ENCODE measurements at regions of chr15 and their contacts with region 1.

Region 1: DNA sequence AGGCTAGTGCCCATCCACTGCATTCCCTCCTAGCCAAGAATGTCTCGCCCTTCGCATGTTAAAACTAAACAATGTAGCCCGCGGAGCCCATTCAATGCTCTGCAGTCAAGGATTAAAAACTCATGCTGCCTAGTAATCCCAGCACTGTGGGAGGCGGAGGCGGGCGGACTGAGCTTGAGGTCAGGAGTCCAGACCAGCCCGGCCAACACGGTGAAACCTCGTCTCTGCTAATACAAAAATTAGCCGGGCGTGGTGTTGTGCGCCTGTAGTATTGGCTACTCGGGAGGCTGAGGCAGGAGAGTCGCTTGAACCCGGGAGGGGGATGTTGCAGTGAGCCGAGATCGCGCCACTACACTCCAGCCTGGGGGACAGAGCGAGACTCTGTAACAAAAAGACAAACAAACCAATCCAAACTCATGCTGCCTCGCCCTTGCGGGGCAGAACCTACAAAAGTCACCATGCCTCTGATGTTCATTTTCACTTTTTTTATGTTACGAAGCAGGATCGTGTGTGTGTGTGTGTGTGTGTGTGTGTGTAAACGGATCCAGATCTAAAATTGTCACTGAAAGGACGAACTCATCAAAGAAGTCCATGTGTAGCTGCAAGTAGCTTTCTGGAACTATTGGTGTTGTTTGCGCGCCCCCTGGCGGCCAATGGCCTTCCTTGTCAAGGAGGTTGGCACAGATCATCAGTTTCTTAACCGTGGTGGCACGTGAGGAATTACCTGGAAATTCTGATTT is 54.8 kb upstream of the SPESP1 start:
- DNase-seq: peak; percentile 75 to 84 (median 81)
- H3K4me3 ChIP-seq: peak overlapping the region in 1 of 3 experiments; percentile 28
- H3K4me3 Mint-ChIP-seq: peak overlapping the region in 1 of 2 donors; percentile 71
- H3K27ac ChIP-seq: no peak overlapping the region
- H3K27ac Mint-ChIP-seq: no peak overlapping the region
- H3K4me1 ChIP-seq: peaks cover 5 to 6% of the 10 kb centered on the region in 2 donors
- H3K4me1 Mint-ChIP-seq: peaks cover 6% of the 10 kb centered on the region
- H3K27me3 ChIP-seq: peaks cover 0 to 2% of the 10 kb centered on the region in 2 donors
- H3K27me3 Mint-ChIP-seq: peaks cover 3 to 13% (median 5%) of the 10 kb centered on the region in 3 donors
- CTCF ChIP-seq: peak; percentile 79

Region 2: DNA sequence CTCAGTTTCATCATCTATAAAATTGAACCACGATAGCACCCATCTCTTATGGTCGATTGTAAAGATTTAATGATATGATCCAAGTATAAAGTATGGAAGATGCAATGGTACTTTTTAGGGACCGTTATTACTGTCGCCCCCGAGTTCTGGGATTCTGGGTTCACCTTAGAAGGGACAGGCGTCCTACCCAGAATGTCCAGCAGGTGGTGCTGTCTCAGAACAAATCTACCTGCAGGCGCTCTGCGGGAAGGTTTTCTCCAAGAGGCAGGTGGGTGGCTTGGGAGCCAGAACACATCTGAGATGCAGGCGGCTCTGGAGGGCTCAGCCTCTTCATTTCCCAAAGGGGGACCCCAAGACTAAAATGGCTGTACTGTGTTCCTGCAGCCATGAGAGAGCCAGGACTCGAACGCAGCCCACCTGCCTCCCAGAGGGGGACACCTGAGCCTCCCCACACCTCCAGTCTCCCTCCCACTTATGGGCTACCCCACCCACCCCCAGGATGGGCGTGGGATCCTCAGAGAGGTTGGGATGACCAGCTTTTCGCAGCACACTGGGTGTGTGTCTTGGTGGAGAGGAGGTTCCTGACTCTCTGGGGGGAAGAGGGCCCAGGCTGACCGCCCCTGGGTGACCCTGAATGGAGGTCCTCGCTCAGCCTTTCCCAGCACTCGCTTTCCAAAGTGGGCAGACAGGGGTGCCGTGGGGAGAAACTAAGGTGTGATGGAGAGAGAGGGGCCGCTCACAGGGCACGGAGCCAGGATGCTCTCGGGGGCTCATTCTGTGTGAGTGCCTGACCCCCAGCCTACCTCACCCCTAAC is 324.9 kb before region 1 on chr15:
- intact Hi-C with region 1: loop called (anchors 2 to 5 kb)
- DNase-seq: peak; percentile 32 to 55 (median 53)
- H3K4me3 ChIP-seq: no peak overlapping the region
- H3K4me3 Mint-ChIP-seq: no peak overlapping the region
- H3K27ac ChIP-seq: no peak overlapping the region
- H3K27ac Mint-ChIP-seq: no peak overlapping the region
- H3K4me1 ChIP-seq: no peaks in the 10 kb centered on the region
- H3K4me1 Mint-ChIP-seq: no peaks in the 10 kb centered on the region
- H3K27me3 ChIP-seq: no peaks in the 10 kb centered on the region
- H3K27me3 Mint-ChIP-seq: peaks cover 10 to 13% (median 12%) of the 10 kb centered on the region in 3 donors
- CTCF ChIP-seq: peak; percentile 96

Region 3: GRCh38 chr15:68559345-68560310 is 315.9 kb before region 1 on chr15:
- intact Hi-C with region 1: loop called in 1 of 2 experiments (anchors 5 kb)
- DNase-seq: peak; percentile 63 to 74 (median 65)
- H3K4me3 ChIP-seq: peak overlapping the region in 2 of 3 experiments; percentile 20 to 64
- H3K4me3 Mint-ChIP-seq: peak overlapping the region; percentile 77 to 96
- H3K27ac ChIP-seq: no peak overlapping the region
- H3K27ac Mint-ChIP-seq: peak overlapping the region in 1 of 7 donors; percentile 45
- H3K4me1 ChIP-seq: peaks cover 17 to 20% of the 10 kb centered on the region in 2 donors
- H3K4me1 Mint-ChIP-seq: peaks cover 20% of the 10 kb centered on the region
- H3K27me3 ChIP-seq: peaks cover 8 to 35% of the 10 kb centered on the region in 2 donors
- H3K27me3 Mint-ChIP-seq: peaks cover 32 to 41% (median 39%) of the 10 kb centered on the region in 3 donors
- CTCF ChIP-seq: peak; percentile 98

Region 4: DNA sequence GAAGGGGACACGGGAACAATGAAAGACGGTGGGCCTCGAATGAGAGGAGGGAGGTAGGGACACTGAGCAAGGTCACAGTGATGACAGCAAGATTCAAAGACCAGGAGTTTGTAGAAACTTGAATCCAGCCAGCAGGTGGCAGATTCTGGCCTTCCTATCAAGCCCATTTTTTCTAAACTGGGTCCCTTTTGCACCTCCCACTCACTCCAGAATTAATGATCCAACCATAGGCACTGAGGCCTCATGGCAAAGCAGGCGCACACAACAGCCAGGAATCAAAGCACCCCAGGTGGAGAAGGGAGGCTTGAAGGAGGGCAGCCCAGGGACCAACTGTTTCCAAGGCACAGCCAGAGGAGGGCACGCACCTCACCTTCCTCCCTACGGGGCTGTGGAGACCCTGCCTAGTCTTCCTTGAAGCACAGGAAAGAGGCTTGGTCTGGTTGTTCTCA is 145.1 kb before region 1 on chr15:
- intact Hi-C with region 1: loop called (anchors 2 to 5 kb)
- DNase-seq: peak; percentile 38 to 55 (median 45)
- H3K4me3 ChIP-seq: no peak overlapping the region
- H3K4me3 Mint-ChIP-seq: no peak overlapping the region
- H3K27ac ChIP-seq: no peak overlapping the region
- H3K27ac Mint-ChIP-seq: no peak overlapping the region
- H3K4me1 ChIP-seq: peaks cover 8 to 12% of the 10 kb centered on the region in 2 donors
- H3K4me1 Mint-ChIP-seq: peaks cover 17% of the 10 kb centered on the region
- H3K27me3 ChIP-seq: no peaks in the 10 kb centered on the region
- H3K27me3 Mint-ChIP-seq: peaks cover 0 to 3% (median 1%) of the 10 kb centered on the region in 3 donors
- CTCF ChIP-seq: peak; percentile 70

Region 5: DNA sequence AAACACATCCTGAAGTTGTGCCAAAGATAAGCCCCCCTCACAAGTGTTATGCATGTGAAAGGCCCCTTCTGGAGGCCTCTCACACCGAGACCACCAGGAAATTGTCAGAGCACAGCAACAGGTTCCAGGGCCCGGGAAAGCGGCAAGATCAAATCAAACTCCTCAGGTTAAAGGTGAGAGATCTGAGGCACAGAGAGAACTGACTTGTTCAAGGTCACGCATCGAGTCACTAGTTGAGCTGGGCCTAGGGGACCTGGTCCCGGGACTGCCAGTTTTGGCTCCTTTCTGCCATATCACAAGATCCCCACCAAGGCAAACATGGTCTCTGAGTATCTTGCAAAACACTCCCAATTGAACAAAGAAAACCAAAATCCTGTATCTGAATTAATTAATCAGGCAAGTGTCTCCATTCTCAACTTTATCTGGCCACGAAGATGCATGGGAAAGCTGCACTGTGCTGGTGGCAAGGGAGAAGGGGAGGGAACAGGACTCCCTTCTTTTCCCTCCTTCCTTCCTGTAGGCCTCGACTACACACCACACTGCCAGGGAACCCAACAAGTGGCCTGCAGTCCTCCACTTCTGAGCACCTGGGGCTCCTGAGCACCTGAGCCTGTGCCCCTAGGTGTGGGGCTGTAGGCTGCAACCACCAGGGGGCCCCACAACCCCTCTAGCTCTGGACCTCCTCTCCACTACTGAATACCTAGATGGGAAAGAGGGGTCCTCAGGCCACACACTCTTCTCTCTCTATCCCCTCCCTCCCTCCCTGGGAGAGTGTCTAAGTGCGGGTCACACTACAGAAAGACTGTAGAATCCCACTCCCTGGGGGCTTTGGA is 92.1 kb before region 1 on chr15:
- intact Hi-C with region 1: loop called in 1 of 2 experiments (anchors 10 kb)
- DNase-seq: peak in 2 of 3 donors; percentile 42 to 46
- H3K4me3 ChIP-seq: peak overlapping the region in 1 of 3 experiments; percentile 70
- H3K4me3 Mint-ChIP-seq: peak overlapping the region in 1 of 2 donors; percentile 78
- H3K27ac ChIP-seq: peak overlapping the region; percentile 88 to 93
- H3K27ac Mint-ChIP-seq: peak overlapping the region; percentile 85 to 98 (median 93)
- H3K4me1 ChIP-seq: peaks cover 54 to 55% of the 10 kb centered on the region in 2 donors
- H3K4me1 Mint-ChIP-seq: peaks cover 57% of the 10 kb centered on the region
- H3K27me3 ChIP-seq: no peaks in the 10 kb centered on the region
- H3K27me3 Mint-ChIP-seq: peaks cover 0 to 3% (median 0%) of the 10 kb centered on the region in 3 donors
- CTCF ChIP-seq: peak; percentile 78

Measured in CD14-positive monocyte (primary cell).